ENCODE measurements at regions of chr1 and their contacts with region 1.

Region 1: GRCh38 chr1:19643602-19644394 is at the start of gene NBL1:
- DNase-seq: no peak
- ATAC-seq: peak; percentile 74
- H3K4me3 ChIP-seq: peak within 1 kb of the TSS; percentile 68 to 92
- H3K27ac ChIP-seq: peak within 1 kb of the TSS; percentile 82
- H3K4me1 ChIP-seq: peaks cover 49 to 70% of the 10 kb centered on the region in 2 experiments
- H3K27me3 ChIP-seq: no peaks in the 10 kb centered on the region
- CTCF ChIP-seq: no peak
- POLR2A ChIP-seq: peak; percentile 10
- RAD21 ChIP-seq: no peak
- total RNA-seq, gene NBL1: 75.4 TPM

Region 2: GRCh38 chr1:19251305-19252196 is 392.2 kb before region 1 on chr1 and contains the starts of genes EMC1 and MRTO4:
- CTCF ChIA-PET with region 1: no interaction called
- POLR2A ChIA-PET with region 1: no interaction called
- RAD21 ChIA-PET with region 1: no interaction called
- intact Hi-C with region 1: loop called (anchors 5 kb)
- DNase-seq: peak; percentile 48
- ATAC-seq: peak; percentile 85
- H3K4me3 ChIP-seq: peak within 1 kb of the TSS; percentile 100
- H3K27ac ChIP-seq: peak within 1 kb of the TSS; percentile 98
- H3K4me1 ChIP-seq: peaks cover 17 to 22% of the 10 kb centered on the region in 2 experiments
- H3K27me3 ChIP-seq: no peaks in the 10 kb centered on the region
- CTCF ChIP-seq: no peak
- POLR2A ChIP-seq: peak; percentile 76
- RAD21 ChIP-seq: no peak
- total RNA-seq, gene EMC1: 66.6 TPM
- total RNA-seq, gene MRTO4: 79.3 TPM

Region 3: DNA sequence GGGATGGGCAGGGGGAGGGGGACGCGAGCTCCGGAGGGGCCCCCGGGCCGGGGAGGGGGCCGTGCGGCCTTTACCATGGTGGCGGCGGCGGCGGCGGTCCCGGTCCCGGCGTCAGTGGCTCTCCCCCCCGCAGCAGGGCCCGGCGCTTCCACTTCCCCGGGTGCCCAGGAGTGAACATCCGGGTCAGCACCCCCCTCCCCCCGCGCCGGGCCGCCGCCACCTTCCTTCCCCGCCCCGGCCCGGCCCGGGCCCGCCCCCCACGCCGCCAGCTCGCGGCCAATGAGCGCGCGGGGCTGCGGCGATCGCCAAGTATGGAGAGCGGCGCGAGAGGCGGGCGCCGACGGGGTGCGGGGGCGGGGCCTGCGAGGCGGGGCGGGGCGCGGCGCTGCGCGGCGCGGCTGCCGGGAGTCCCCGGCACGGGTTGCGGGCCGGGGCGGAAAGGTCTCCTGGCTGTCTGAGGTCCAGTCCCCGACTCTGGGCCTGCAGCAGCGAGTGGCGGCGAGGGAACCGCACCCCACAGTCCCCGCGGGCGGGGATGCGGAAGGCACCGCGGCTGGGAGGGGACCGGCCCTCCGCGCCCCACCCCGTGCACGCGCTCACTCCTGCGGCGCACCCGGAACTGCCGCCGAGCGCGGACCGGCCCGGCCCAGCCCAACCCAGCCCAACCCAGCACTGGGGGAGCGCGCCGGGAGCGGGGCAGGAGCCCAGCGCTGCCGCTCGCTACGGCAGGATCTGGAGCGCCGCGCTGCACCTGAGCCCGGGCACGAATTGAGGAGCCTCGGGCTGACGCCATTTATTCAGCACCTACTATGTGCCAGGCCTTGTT is 158.2 kb before region 1 on chr1 and contains the start of gene CAPZB:
- CTCF ChIA-PET with region 1: no interaction called
- POLR2A ChIA-PET with region 1: interaction called, 3 read pairs
- RAD21 ChIA-PET with region 1: no interaction called
- intact Hi-C with region 1: loop called (anchors 5 kb)
- DNase-seq: peak; percentile 48
- ATAC-seq: peak; percentile 92
- H3K4me3 ChIP-seq: peak within 1 kb of the TSS; percentile 92 to 97
- H3K27ac ChIP-seq: peak within 1 kb of the TSS; percentile 87
- H3K4me1 ChIP-seq: peaks cover 11 to 23% of the 10 kb centered on the region in 2 experiments; a peak in 3 of 4 replicates
- H3K27me3 ChIP-seq: no peaks in the 10 kb centered on the region
- CTCF ChIP-seq: no peak
- POLR2A ChIP-seq: peak; percentile 43
- RAD21 ChIP-seq: no peak
- total RNA-seq, gene CAPZB: 203 TPM

Region 4: GRCh38 chr1:19596714-19597495 is 46.9 kb before region 1 on chr1:
- CTCF ChIA-PET with region 1: interaction called, 3 read pairs
- POLR2A ChIA-PET with region 1: interaction called, 6 read pairs
- RAD21 ChIA-PET with region 1: no interaction called
- intact Hi-C with region 1: loop called (anchors 5 kb)
- DNase-seq: peak; percentile 96
- ATAC-seq: peak; percentile 94
- H3K4me3 ChIP-seq: peak overlapping the region; percentile 89 to 94
- H3K27ac ChIP-seq: peak overlapping the region; percentile 80
- H3K4me1 ChIP-seq: peaks cover 3 to 21% of the 10 kb centered on the region in 2 experiments; a peak in 3 of 4 replicates
- H3K27me3 ChIP-seq: no peaks in the 10 kb centered on the region
- CTCF ChIP-seq: no peak
- POLR2A ChIP-seq: peak; percentile 45
- RAD21 ChIP-seq: no peak

Region 5: GRCh38 chr1:19616489-19616888 is 27.3 kb before region 1 on chr1:
- CTCF ChIA-PET with region 1: no interaction called
- POLR2A ChIA-PET with region 1: no interaction called
- RAD21 ChIA-PET with region 1: no interaction called
- intact Hi-C with region 1: no loop called
- DNase-seq: no peak
- ATAC-seq: no peak
- H3K4me3 ChIP-seq: no peak overlapping the region
- H3K27ac ChIP-seq: no peak overlapping the region
- H3K4me1 ChIP-seq: no peaks in the 10 kb centered on the region
- H3K27me3 ChIP-seq: no peaks in the 10 kb centered on the region
- CTCF ChIP-seq: no peak
- POLR2A ChIP-seq: no peak
- RAD21 ChIP-seq: no peak

Measured in HCT116 (cell line).